HEK293 (cell line): ENCODE measurements at regions of chr1 and their contacts with region 1.

Region 1: DNA sequence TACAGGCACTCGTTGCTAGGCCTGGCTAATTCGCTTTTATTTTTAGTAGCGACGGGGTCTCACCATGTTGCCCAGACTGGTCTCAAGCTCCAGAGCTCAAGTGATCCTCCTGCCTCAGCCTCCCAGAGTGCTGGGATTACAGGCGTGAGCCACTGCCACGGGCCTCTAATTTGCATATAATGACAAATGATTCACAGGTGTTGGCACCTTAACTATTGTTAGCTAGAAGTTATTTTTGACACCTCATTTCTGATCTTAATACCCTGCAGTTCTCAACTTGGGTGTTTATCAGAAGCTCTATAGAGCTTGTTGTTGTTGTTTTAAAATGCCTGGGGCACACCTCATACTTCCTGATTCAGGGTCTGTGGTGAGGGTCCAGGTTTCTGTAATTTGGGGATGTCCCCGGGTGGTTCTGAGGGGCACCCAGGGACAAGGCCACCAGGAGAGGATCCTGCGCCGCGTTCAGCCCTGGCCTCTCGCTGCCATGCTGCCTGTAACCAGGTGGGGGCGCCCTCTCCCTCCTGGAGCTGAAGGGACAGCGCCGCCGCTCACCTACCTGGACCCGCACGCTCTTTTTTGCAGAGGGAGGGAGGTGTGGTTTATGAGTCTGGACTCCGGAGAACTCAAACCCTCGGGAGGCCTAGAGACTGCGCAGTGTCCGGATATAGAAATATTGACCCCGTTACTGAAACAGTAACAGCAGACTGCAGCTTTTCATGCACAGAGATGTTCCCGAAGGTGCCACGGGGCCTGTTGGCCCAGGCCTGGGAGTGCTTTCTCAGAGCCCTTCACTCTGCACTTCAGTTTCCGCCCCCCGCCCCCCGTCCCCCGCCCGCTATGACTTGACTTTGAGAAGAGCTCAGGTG is 23.0 kb upstream of the NEK2 start:
- H3K4me3 ChIP-seq: no peak overlapping the region
- H3K27ac ChIP-seq: no peak overlapping the region
- H3K4me1 ChIP-seq: no peaks in the 10 kb centered on the region
- CTCF ChIP-seq: peak; percentile 93

Region 2: DNA sequence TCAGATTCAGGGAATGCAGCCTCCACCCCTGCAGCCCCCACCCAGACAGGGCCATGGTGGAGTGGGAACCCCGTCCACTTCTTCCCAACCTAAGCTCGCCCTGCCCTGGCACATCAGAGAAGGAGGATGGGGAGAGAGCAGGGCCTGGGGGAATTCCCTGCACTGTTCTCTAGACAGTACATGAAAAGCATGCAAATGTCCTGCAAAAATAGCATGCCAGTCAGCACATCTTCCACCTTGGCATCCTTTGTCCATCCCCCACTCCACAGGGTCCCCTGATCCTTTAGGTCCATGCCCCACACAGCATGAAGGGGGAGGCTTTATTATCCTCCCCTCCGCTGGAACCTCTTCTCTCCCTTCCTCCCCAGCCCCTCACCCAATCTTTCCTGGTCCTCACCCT is 171.4 kb before region 1 on chr1:
- CTCF ChIA-PET with region 1: no interaction called
- POLR2A ChIA-PET with region 1: no interaction called
- H3K4me3 ChIP-seq: no peak overlapping the region
- H3K27ac ChIP-seq: no peak overlapping the region
- H3K4me1 ChIP-seq: no peaks in the 10 kb centered on the region
- CTCF ChIP-seq: no peak

Region 3: GRCh38 chr1:211632631-211633523 is 65.5 kb before region 1 on chr1:
- CTCF ChIA-PET with region 1: no interaction called
- POLR2A ChIA-PET with region 1: no interaction called
- H3K4me3 ChIP-seq: no peak overlapping the region
- H3K27ac ChIP-seq: no peak overlapping the region
- H3K4me1 ChIP-seq: peaks cover 8% of the 10 kb centered on the region
- CTCF ChIP-seq: no peak

Region 4: GRCh38 chr1:211680752-211681327 is 17.6 kb before region 1 on chr1:
- CTCF ChIA-PET with region 1: interaction called, 60 read pairs
- POLR2A ChIA-PET with region 1: no interaction called
- H3K4me3 ChIP-seq: no peak overlapping the region
- H3K27ac ChIP-seq: no peak overlapping the region
- H3K4me1 ChIP-seq: no peaks in the 10 kb centered on the region
- CTCF ChIP-seq: peak; percentile 78

Region 5: GRCh38 chr1:211711315-211711705 is 12.9 kb after region 1 on chr1:
- CTCF ChIA-PET with region 1: interaction called, 18 read pairs
- POLR2A ChIA-PET with region 1: no interaction called
- H3K4me3 ChIP-seq: no peak overlapping the region
- H3K27ac ChIP-seq: no peak overlapping the region
- H3K4me1 ChIP-seq: no peaks in the 10 kb centered on the region
- CTCF ChIP-seq: no peak

Region 6: GRCh38 chr1:211735208-211736170 is 37.1 kb after region 1 on chr1:
- CTCF ChIA-PET with region 1: interaction called, 16 read pairs
- POLR2A ChIA-PET with region 1: interaction called, 5 read pairs
- H3K4me3 ChIP-seq: no peak overlapping the region
- H3K27ac ChIP-seq: peak overlapping the region; percentile 27; the same call in 1 of the 2 replicates
- H3K4me1 ChIP-seq: peaks cover 8% of the 10 kb centered on the region
- CTCF ChIP-seq: no peak

Region 7: DNA sequence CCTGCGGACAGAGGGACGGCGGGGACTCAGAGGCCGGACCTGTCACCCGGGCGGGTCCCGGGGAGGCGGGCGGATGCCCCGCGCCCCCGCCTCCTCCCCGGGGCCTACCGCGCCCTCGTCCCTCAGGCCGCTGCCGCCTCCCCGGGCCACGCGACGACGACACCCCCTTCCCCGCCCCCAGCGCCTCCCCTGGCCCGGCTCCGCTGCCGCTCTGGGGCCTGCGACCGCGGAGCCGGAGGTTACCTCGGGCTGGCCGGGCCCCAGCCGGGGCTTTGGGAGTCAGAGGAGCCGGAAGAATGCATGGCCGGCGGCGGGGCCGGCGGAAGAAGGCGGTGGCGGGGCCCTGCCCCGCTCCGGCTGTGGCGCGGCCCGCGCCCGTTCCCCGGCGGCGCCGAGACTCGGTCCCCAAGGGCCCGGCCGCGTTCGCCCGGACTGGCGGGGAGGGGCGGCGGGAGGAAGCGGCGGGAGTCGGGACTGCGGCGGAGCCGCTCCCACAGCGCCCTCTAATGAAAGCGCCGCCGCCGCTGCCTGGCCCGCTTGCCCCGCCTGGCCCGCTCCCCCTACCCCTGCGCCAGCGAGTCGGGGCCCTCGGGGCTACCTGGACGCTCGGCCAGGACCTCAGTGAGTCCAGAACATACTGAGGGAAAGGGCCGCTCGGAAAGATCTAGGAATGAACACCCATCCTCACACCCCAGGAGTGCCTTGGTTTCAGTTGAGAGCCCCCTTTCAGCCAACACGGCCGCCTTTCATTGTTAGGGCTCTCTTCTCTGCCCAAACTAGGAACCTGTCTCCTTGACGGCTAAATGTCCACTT is 132.1 kb after region 1 on chr1 and contains the start of gene LPGAT1:
- CTCF ChIA-PET with region 1: interaction called, 31 read pairs
- POLR2A ChIA-PET with region 1: no interaction called
- H3K4me3 ChIP-seq: peak within 1 kb of the TSS; percentile 52
- H3K27ac ChIP-seq: peak within 1 kb of the TSS; percentile 71; the same call in 1 of the 2 replicates
- H3K4me1 ChIP-seq: no peaks in the 10 kb centered on the region
- CTCF ChIP-seq: peak; percentile 38; the same call in 1 of the 2 replicates

Region 8: DNA sequence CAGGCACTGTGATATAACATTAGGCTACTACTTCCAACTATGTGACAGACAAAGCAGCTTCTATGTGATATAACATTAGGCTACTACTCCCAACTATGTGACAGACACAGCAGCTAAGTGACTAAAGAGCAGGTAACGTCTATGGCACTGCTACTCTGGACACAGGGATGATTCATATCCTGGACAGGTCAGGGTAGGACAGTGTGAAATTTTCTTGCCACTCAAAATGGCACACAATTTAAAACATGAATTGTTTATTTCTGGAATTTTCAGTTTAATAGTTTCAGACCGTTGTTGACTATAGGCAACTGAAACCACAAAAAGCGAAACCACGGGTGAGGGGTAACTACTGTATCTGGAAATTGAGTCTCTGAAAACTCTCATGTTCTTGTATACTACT is 342.2 kb after region 1 on chr1:
- CTCF ChIA-PET with region 1: interaction called, 47 read pairs
- POLR2A ChIA-PET with region 1: no interaction called
- H3K4me3 ChIP-seq: no peak overlapping the region
- H3K27ac ChIP-seq: no peak overlapping the region
- H3K4me1 ChIP-seq: peaks cover 3% of the 10 kb centered on the region; the same call in 1 of the 2 replicates
- CTCF ChIP-seq: no peak

Region 9: DNA sequence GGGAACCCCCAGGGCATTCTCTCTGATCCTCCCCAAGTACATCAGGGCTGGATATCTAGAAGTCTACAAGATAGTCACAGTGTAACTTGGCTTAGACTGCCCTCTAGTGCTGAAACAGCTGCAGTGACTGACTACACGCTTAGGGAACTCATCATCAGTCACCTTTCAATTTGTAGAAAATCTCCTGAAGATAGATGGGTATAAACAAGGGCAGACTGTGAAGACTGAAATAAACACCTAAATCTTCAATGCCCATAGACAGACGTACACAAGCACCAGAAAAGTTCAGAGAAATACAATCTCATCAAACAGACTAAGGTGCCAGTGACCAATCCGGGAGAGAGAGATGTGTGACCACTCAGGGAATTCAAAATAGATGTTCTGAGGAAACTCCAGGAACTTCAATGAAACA is 669.7 kb after region 1 on chr1:
- CTCF ChIA-PET with region 1: interaction called, 18 read pairs
- POLR2A ChIA-PET with region 1: no interaction called
- H3K4me3 ChIP-seq: no peak overlapping the region
- H3K27ac ChIP-seq: no peak overlapping the region
- H3K4me1 ChIP-seq: no peaks in the 10 kb centered on the region
- CTCF ChIP-seq: no peak